Activated CD4-positive, alpha-beta memory T cell treated with anti-CD3 and anti-CD28 coated beads for 36 hours (primary cell): ENCODE measurements at regions of chr10 and their contacts with region 1.

Region 1: GRCh38 chr10:127853868-127854768 is 38.6 kb downstream of the CLRN3 start:
- DNase-seq: peak; percentile 47
- H3K4me3 Mint-ChIP-seq: no peak overlapping the region
- H3K27ac Mint-ChIP-seq: no peak overlapping the region
- H3K4me1 Mint-ChIP-seq: no peaks in the 10 kb centered on the region
- H3K27me3 Mint-ChIP-seq: peaks cover 2% of the 10 kb centered on the region

Region 2: GRCh38 chr10:127563718-127564553 is 290.2 kb before region 1 on chr10:
- CTCF ChIA-PET with region 1: interaction called, 17 read pairs
- POLR2A ChIA-PET with region 1: no interaction called
- intact Hi-C with region 1: loop called (anchors 5 kb)
- DNase-seq: peak; percentile 35
- H3K4me3 Mint-ChIP-seq: no peak overlapping the region
- H3K27ac Mint-ChIP-seq: no peak overlapping the region
- H3K4me1 Mint-ChIP-seq: no peaks in the 10 kb centered on the region
- H3K27me3 Mint-ChIP-seq: no peaks in the 10 kb centered on the region

Region 3: GRCh38 chr10:127715782-127716378 is 138.2 kb before region 1 on chr10:
- CTCF ChIA-PET with region 1: interaction called, 15 read pairs
- POLR2A ChIA-PET with region 1: no interaction called
- intact Hi-C with region 1: loop called (anchors 5 kb)
- DNase-seq: no peak
- H3K4me3 Mint-ChIP-seq: no peak overlapping the region
- H3K27ac Mint-ChIP-seq: no peak overlapping the region
- H3K4me1 Mint-ChIP-seq: no peaks in the 10 kb centered on the region
- H3K27me3 Mint-ChIP-seq: peaks cover 2% of the 10 kb centered on the region